IMR-90 (cell line): ENCODE measurements at regions of chr19 and their contacts with region 1.

Region 1: GRCh38 chr19:3544742-3545668 is 6.0 kb downstream of the TEKTIP1 start:
- DNase-seq: peak; percentile 26
- ATAC-seq: peak; percentile 88
- H3K4me3 ChIP-seq: no peak overlapping the region
- H3K27ac ChIP-seq: no peak overlapping the region
- H3K4me1 ChIP-seq: no peaks in the 10 kb centered on the region
- H3K27me3 ChIP-seq: no peaks in the 10 kb centered on the region
- CTCF ChIP-seq: peak; percentile 83
- POLR2A ChIP-seq: no peak
- RAD21 ChIP-seq: peak; percentile 76

Region 2: GRCh38 chr19:3053218-3053699 is 491.7 kb before region 1 on chr19:
- CTCF ChIA-PET with region 1: no interaction called
- POLR2A ChIA-PET with region 1: interaction called, 11 read pairs
- dilution Hi-C with region 1: no loop called
- in situ Hi-C with region 1: no loop called
- intact Hi-C with region 1: no loop called
- DNase-seq: no peak
- ATAC-seq: no peak
- H3K4me3 ChIP-seq: no peak overlapping the region
- H3K27ac ChIP-seq: no peak overlapping the region
- H3K4me1 ChIP-seq: peaks cover 21% of the 10 kb centered on the region
- H3K27me3 ChIP-seq: no peaks in the 10 kb centered on the region
- CTCF ChIP-seq: no peak
- POLR2A ChIP-seq: no peak
- RAD21 ChIP-seq: no peak

Region 3: GRCh38 chr19:3576718-3577527 is 31.9 kb after region 1 on chr19:
- CTCF ChIA-PET with region 1: no interaction called
- POLR2A ChIA-PET with region 1: no interaction called
- dilution Hi-C with region 1: no loop called
- in situ Hi-C with region 1: no loop called
- intact Hi-C with region 1: no loop called
- DNase-seq: peak; percentile 43
- ATAC-seq: no peak
- H3K4me3 ChIP-seq: no peak overlapping the region
- H3K27ac ChIP-seq: no peak overlapping the region
- H3K4me1 ChIP-seq: peaks cover 5% of the 10 kb centered on the region
- H3K27me3 ChIP-seq: no peaks in the 10 kb centered on the region
- CTCF ChIP-seq: no peak
- POLR2A ChIP-seq: no peak
- RAD21 ChIP-seq: no peak

Region 4: DNA sequence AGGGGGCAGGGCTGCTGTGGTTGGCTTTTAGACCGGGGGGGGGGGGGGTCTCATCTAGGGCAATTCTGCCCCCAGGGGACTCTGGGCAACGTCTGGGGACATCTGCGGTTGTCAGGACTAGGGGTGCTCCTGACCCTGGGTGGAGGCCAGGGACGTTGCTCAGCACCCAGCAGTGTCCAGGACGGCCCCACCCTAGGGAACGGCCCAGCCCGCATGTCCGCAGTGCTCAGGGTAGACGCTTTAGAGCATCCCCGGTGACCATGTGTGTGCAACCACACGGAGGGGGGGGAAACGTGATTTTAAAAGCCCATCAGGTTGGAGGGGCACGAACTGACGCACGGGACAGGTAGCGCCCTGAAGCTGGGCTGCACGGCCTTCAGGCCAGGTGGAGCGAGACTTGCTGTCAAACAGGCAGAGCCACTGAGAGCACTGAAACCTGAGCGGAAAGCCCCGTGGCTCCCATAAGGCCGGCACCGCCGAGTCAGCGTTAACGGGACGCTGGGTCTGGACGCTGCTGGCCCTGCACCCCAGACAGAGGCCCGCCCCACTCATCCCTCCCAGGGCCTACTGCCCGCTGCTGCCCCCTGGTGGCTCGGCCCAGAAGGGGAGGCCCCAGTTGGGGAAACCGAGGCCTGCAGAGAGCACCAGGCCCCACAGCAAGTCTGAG is 73.3 kb after region 1 on chr19:
- CTCF ChIA-PET with region 1: no interaction called
- POLR2A ChIA-PET with region 1: no interaction called
- dilution Hi-C with region 1: no loop called
- in situ Hi-C with region 1: no loop called
- intact Hi-C with region 1: loop called (anchors 1 kb)
- DNase-seq: peak; percentile 29
- ATAC-seq: peak; percentile 95
- H3K4me3 ChIP-seq: no peak overlapping the region
- H3K27ac ChIP-seq: no peak overlapping the region
- H3K4me1 ChIP-seq: peaks cover 3% of the 10 kb centered on the region; the same call in 1 of the 2 replicates
- H3K27me3 ChIP-seq: no peaks in the 10 kb centered on the region
- CTCF ChIP-seq: peak; percentile 84
- POLR2A ChIP-seq: no peak
- RAD21 ChIP-seq: peak; percentile 80

Region 5: DNA sequence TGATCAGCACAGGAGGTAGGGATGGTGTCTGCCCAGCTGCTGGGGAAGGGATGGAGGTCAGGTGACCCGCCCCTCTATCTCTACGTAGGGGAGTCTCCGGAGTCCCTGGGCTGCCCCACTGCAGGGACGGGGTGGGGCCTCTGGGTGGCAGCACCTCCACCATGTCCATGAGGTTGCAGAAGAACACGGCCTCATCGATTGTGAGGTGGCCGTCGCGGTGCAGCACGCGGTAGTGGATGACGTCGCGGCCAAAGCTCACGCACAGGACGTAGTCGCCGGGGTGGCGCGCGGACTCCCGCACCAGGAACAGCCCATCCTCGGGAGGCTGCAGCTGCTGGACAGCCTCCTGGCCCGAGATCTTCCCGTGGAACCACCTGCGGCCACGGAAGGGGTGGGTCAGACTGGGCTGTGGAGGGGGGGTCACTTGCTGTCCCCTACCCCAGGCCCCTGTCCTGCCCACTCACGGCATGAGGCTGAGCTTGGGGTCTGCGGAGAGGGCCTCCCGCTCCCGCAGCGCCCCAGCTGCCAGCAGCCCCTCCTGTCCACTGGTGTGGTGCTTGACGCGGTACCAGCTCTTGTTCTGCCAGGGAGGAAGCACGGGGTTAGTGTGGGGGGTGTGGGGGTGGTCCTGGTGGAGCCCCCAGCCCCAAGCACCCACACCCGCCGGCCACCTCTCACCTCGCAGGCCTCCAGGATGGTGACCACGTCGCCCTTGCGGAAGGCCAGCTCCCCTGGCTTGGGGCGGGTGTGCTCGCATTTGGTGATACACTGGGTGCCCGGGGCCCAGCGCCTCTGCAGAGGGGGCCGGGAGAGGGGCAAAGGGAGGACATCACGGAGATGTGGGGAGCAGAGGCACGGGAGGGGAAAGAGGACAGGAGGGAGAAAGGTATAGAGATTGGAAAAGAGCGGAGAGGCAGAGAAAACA is 238.9 kb after region 1 on chr19:
- CTCF ChIA-PET with region 1: no interaction called
- POLR2A ChIA-PET with region 1: no interaction called
- dilution Hi-C with region 1: no loop called
- in situ Hi-C with region 1: no loop called
- intact Hi-C with region 1: no loop called
- DNase-seq: no peak
- ATAC-seq: no peak
- H3K4me3 ChIP-seq: no peak overlapping the region
- H3K27ac ChIP-seq: no peak overlapping the region
- H3K4me1 ChIP-seq: no peaks in the 10 kb centered on the region
- H3K27me3 ChIP-seq: peaks cover 21% of the 10 kb centered on the region
- CTCF ChIP-seq: 0 out of 2 replicates have a peak, but pooled peaks have one; percentile 8
- POLR2A ChIP-seq: no peak
- RAD21 ChIP-seq: no peak

Region 6: DNA sequence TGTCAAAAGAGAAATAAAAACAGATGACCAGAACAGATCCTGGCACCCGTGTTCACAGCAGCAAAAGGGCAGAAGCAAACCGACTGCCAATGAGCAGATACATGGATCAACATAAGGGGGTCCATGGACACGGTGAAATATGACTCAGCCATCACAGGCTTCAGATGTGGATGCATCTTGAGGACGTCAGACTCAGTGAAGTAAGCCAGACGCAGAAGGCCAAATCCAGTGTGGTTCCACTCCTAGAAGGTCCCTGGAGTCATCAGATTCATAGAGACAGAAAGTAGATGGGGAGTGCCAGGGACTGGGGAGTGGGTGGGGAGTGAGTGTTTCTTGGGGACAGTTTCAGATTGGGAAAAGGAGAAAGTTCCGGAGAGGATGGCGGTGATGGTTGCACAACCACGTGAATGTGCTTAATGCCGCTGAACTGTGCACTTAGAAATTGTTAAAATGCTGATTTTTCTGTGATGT is 1043.3 kb after region 1 on chr19:
- CTCF ChIA-PET with region 1: interaction called, 10 read pairs
- POLR2A ChIA-PET with region 1: no interaction called
- dilution Hi-C with region 1: no loop called
- in situ Hi-C with region 1: no loop called
- intact Hi-C with region 1: no loop called
- DNase-seq: peak; percentile 21
- ATAC-seq: no peak
- H3K4me3 ChIP-seq: no peak overlapping the region
- H3K27ac ChIP-seq: no peak overlapping the region
- H3K4me1 ChIP-seq: peaks cover 3% of the 10 kb centered on the region; the same call in 1 of the 2 replicates
- H3K27me3 ChIP-seq: peaks cover 47% of the 10 kb centered on the region
- CTCF ChIP-seq: no peak
- POLR2A ChIP-seq: no peak
- RAD21 ChIP-seq: no peak